Activated naive CD4-positive, alpha-beta T cell treated with anti-CD3 and anti-CD28 coated beads, Interleukin-2, amount 10 ng/mL, durations not matched to agents 7 days and 5 days (primary cell): ENCODE measurements at regions of chr10 and their contacts with region 1.

Region 1: GRCh38 chr10:110600487-110601101 is 33.1 kb downstream of the SMC3 start:
- DNase-seq: peak; percentile 50
- H3K4me3 Mint-ChIP-seq: no peak overlapping the region
- H3K27ac Mint-ChIP-seq: no peak overlapping the region
- H3K4me1 Mint-ChIP-seq: no peaks in the 10 kb centered on the region
- H3K27me3 Mint-ChIP-seq: no peaks in the 10 kb centered on the region

Region 2: DNA sequence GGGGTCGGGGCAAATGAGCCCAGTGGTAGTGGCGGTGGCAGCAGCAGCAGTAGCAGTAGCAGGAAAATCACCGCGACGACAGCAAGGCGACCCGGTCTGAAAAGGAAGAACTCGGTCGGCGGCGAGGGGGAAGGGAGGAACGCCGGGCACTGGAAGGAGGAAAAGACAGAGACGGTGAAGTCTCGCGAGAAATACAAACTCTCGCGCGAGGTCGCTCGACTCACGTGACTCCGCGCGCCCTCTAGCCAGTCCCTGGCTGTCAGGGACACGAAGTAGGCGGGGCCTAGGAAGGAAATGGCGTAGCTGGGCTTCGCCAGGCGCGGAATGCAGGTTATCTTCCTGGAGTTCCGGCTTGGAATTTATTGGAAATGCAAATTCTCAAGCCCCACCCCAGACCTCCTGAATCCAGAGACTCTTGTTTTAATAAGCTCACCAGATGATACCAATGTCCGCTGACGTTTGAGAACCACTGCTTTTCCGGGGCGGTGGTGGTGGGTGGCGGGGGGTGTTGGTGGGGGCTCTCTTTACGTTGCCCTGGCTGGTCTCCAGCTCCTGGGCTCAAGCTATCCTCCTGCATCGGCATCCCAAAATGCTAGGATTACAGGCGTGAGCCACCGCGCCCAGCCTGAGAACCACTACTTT is 295.7 kb before region 1 on chr10 and contains the start of gene SMNDC1:
- CTCF ChIA-PET with region 1: interaction called, 20 read pairs
- DNase-seq: peak; percentile 98
- H3K4me3 Mint-ChIP-seq: peak within 1 kb of the TSS; percentile 93
- H3K27ac Mint-ChIP-seq: peak within 1 kb of the TSS; percentile 98
- H3K4me1 Mint-ChIP-seq: peaks cover 53% of the 10 kb centered on the region
- H3K27me3 Mint-ChIP-seq: no peaks in the 10 kb centered on the region

Region 3: GRCh38 chr10:110311357-110311949 is 289.1 kb before region 1 on chr10:
- CTCF ChIA-PET with region 1: interaction called, 22 read pairs
- DNase-seq: peak; percentile 59
- H3K4me3 Mint-ChIP-seq: no peak overlapping the region
- H3K27ac Mint-ChIP-seq: no peak overlapping the region
- H3K4me1 Mint-ChIP-seq: peaks cover 26% of the 10 kb centered on the region
- H3K27me3 Mint-ChIP-seq: peaks cover 8% of the 10 kb centered on the region